ENCODE measurements at regions of chr2 and their contacts with region 1.

Region 1: GRCh38 chr2:118855451-118856279 is 8.2 kb upstream of the EN1 start:
- DNase-seq: peak; percentile 53
- ATAC-seq: peak; percentile 96
- H3K4me3 ChIP-seq: peak overlapping the region; percentile 40 to 47
- H3K27ac ChIP-seq: no peak overlapping the region
- H3K4me1 ChIP-seq: peaks cover 0 to 4% of the 10 kb centered on the region in 2 experiments; a peak in 1 of 4 replicates
- H3K27me3 ChIP-seq: no peaks in the 10 kb centered on the region
- CTCF ChIP-seq: peak; percentile 75 to 96 (median 75)
- POLR2A ChIP-seq: no peak
- RAD21 ChIP-seq: peak; percentile 91

Region 2: DNA sequence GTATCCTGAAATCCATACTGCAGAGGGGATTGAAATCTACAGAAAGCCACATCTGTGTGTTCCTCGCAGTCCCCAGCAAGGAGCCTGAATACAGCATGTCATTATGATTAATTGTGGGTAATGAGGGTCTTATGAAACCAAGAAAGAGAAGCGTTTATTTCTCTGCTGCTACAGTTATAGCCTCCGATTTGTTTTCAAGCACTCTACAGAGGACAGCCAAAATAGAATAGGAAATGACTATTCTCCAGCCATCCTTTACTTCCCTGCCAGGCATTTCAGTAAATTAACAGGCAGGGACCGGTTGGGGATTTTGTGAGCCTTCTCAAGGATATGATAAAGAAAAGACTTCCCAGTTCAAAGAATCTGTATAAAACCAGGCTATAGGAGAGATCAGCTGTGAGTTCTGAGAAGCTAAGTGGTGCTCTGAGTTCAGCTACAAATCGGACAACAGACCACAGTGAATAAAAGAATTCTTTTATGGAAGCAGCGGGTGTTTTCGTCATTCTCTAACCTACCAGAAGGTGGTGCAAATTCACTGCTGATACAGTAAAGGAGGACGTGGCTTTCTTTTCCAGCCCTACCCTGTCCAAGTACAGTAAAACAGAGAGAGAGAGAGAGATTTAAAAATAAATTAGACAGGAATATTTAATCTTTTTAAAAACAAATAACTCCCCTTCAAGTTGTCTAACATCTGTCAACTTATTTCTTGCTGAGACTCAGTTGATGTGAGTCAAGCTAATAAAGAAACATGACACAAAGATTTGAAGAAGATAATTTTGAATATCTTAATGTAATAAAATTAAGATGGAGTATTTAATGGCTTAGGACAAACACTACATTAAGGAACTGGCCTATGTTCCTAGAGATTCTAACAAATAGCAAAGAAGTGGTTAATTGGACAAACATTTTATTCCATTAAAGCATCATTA is 633.7 kb before region 1 on chr2:
- CTCF ChIA-PET with region 1: interaction called, 28 read pairs
- POLR2A ChIA-PET with region 1: no interaction called
- RAD21 ChIA-PET with region 1: interaction called in 1 of 2 experiments, 6 read pairs
- intact Hi-C with region 1: loop called (anchors 1 kb)
- DNase-seq: peak; percentile 53
- ATAC-seq: peak; percentile 97
- H3K4me3 ChIP-seq: no peak overlapping the region
- H3K27ac ChIP-seq: no peak overlapping the region
- H3K4me1 ChIP-seq: no peaks in the 10 kb centered on the region
- H3K27me3 ChIP-seq: no peaks in the 10 kb centered on the region
- CTCF ChIP-seq: peak; percentile 64 to 84 (median 67)
- POLR2A ChIP-seq: no peak
- RAD21 ChIP-seq: peak; percentile 87

Region 3: DNA sequence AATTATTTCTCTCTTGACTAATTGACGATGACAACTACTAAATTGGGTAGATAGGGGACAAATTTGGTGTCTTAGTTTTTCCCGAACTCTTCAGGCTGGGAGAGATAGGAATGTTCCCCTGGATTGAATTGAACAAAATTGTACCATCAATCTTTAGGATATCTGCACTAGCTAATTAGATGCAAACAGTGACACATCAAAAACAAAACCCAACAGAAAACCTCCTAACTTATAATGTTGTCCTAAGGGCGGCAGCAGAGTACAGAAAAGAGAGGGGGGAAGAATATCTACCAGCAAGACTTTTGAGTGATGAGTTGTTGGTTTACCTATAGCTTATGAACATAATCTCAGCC is 424.5 kb before region 1 on chr2:
- CTCF ChIA-PET with region 1: interaction called, 11 read pairs
- POLR2A ChIA-PET with region 1: no interaction called
- RAD21 ChIA-PET with region 1: no interaction called
- intact Hi-C with region 1: no loop called
- DNase-seq: no peak
- ATAC-seq: no peak
- H3K4me3 ChIP-seq: peak overlapping the region in 1 of 2 experiments; percentile 30; a peak in 2 of 4 replicates
- H3K27ac ChIP-seq: no peak overlapping the region
- H3K4me1 ChIP-seq: peaks cover 0 to 20% of the 10 kb centered on the region in 2 experiments; a peak in 2 of 4 replicates
- H3K27me3 ChIP-seq: no peaks in the 10 kb centered on the region
- CTCF ChIP-seq: peak; percentile 7 to 22 (median 9); a peak in 2 of 6 replicates
- POLR2A ChIP-seq: no peak
- RAD21 ChIP-seq: peak; percentile 44; the same call in 1 of the 2 replicates

Region 4: DNA sequence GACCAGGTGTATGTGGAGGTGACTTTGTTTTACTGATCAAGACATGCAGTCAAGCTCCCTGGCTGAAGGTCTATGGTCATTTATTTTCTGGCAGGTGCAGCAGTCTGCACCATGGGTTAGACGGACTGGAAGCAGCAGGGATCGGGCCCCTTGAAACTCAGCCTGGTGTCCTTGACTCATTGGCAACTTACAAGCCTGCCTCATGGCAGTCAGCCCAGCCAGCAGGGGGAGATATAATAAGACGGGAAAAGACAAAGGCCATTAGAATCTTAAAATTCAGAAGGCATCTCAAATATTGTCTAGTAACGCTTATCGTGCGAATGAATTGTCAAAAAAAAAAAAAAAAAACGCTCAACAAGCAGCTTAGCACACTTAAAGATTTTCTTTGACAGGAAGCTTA is 316.4 kb before region 1 on chr2:
- CTCF ChIA-PET with region 1: interaction called, 5 read pairs
- POLR2A ChIA-PET with region 1: no interaction called
- RAD21 ChIA-PET with region 1: no interaction called
- intact Hi-C with region 1: loop called (anchors 5 kb)
- DNase-seq: peak; percentile 16
- ATAC-seq: peak; percentile 62
- H3K4me3 ChIP-seq: no peak overlapping the region
- H3K27ac ChIP-seq: no peak overlapping the region
- H3K4me1 ChIP-seq: no peaks in the 10 kb centered on the region
- H3K27me3 ChIP-seq: no peaks in the 10 kb centered on the region
- CTCF ChIP-seq: peak; percentile 33 to 68 (median 66); a peak in 5 of 6 replicates
- POLR2A ChIP-seq: no peak
- RAD21 ChIP-seq: peak; percentile 37; the same call in 1 of the 2 replicates

Region 5: GRCh38 chr2:118808429-118808809 is 47.2 kb before region 1 on chr2:
- CTCF ChIA-PET with region 1: no interaction called
- POLR2A ChIA-PET with region 1: no interaction called
- RAD21 ChIA-PET with region 1: no interaction called
- intact Hi-C with region 1: no loop called
- DNase-seq: no peak
- ATAC-seq: no peak
- H3K4me3 ChIP-seq: no peak overlapping the region
- H3K27ac ChIP-seq: no peak overlapping the region
- H3K4me1 ChIP-seq: no peaks in the 10 kb centered on the region
- H3K27me3 ChIP-seq: peaks cover 14% of the 10 kb centered on the region; the same call in 1 of the 2 replicates
- CTCF ChIP-seq: no peak
- POLR2A ChIP-seq: no peak
- RAD21 ChIP-seq: no peak